ENCODE measurements at regions of chr11 and their contacts with region 1.

Region 1: DNA sequence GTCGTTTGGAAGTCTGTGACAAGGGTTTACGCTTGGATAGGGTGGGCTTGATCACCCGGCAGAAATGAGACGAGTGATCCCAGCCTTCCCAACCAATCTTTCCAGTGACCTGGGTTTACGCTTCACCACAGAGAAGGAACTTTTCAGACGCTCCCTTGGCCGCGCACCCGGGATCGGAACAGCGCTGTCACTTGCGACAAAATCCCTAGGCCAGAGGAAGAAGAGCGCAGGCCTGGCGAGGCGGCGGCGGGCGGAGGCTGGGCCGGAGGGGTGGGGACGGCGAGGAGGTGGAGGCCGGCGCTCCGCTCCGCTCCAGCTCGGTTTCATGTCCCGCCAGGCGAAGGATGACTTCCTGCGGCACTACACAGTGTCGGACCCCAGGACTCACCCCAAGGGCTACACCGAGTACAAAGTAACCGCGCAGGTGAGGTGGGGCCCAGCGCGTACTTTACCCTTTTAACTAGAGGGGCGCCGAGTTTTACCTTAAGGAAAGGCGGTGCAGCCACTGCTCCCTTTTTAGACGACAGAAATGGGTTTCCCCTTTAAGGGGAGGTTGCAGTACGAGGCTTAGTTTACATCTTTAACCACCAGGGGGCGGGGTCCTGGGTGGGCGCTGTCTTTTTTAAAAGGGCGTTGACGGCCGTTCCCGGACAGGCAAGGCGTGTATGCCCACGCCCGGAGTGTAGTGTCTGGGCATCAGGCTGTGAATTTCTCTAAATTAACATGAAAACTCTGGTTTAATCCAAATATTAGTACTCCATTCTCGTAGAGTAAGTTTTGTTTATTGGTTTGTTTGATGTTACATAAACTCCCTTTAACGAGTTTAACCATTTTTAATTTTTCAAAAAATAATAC is at the start of gene SNX15:
- DNase-seq: peak; percentile 95
- H3K4me3 Mint-ChIP-seq: peak within 1 kb of the TSS; percentile 79
- H3K27ac Mint-ChIP-seq: peak within 1 kb of the TSS; percentile 82
- H3K4me1 Mint-ChIP-seq: peaks cover 19% of the 10 kb centered on the region
- H3K27me3 Mint-ChIP-seq: no peaks in the 10 kb centered on the region
- total RNA-seq, gene SNX15: 8.9 to 9.4 TPM

Region 2: GRCh38 chr11:65083834-65084597 is 56.6 kb after region 1 on chr11 and contains the starts of genes CDCA5 and ZFPL1:
- CTCF ChIA-PET with region 1: no interaction called
- intact Hi-C with region 1: loop called (anchors 1 kb)
- DNase-seq: peak; percentile 97
- H3K4me3 Mint-ChIP-seq: peak within 1 kb of the TSS; percentile 92
- H3K27ac Mint-ChIP-seq: peak within 1 kb of the TSS; percentile 97
- H3K4me1 Mint-ChIP-seq: peaks cover 39% of the 10 kb centered on the region
- H3K27me3 Mint-ChIP-seq: no peaks in the 10 kb centered on the region
- total RNA-seq, gene CDCA5: 169 to 174 TPM
- total RNA-seq, gene ZFPL1: 24.2 to 25.6 TPM

Measured in activated naive CD4-positive, alpha-beta T cell treated with anti-CD3 and anti-CD28 coated beads for 36 hours (primary cell).